ENCODE measurements at regions of chr1 and their contacts with region 1.

Region 1: GRCh38 chr1:75632350-75632949 is 21.5 kb upstream of the SLC44A5 start:
- DNase-seq: no peak
- ATAC-seq: no peak

Region 2: DNA sequence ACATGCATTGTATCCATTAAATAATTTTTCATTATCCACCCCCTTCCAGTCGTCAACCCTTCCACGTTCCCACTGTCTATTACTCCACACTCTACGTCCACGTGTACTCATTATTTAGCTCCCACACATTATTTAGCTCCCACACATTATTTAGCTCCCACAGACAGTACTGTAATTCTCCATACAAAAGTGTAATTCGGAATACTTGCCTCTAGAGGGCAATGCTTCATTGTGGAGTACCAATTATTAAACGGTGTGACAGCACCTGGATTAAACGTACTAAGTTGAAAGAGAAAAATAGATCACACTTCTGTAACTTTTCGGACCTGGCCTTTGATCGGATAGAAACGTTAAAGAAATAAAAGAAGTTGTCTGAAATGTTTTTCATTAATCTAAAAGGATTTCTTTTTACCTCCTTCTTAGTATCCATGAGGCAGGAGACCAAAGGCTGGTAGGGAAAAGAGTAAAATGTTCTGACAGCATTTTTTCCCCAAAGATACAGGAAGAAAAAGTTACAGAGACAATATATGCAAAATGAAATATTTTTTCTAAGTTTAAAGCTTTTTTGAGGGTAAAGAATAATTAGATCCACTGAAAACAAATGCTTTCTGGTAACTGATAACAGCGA is 399.0 kb before region 1 on chr1:
- intact Hi-C with region 1: loop called (anchors 10 kb)
- DNase-seq: no peak
- ATAC-seq: no peak

Region 3: GRCh38 chr1:75265792-75266191 is 366.7 kb before region 1 on chr1:
- intact Hi-C with region 1: loop called (anchors 5 kb)
- DNase-seq: no peak
- ATAC-seq: no peak

Region 4: GRCh38 chr1:75423616-75424015 is 208.8 kb before region 1 on chr1:
- intact Hi-C with region 1: no loop called
- DNase-seq: no peak
- ATAC-seq: no peak

Measured in Right ventricle myocardium inferior (tissue), 1 donor.